ENCODE measurements at regions of chr2 and their contacts with region 1.

Region 1: GRCh38 chr2:86079981-86080911 is 25.4 kb downstream of the POLR1A start:
- DNase-seq: peak; percentile 91
- H3K4me3 Mint-ChIP-seq: no peak overlapping the region
- H3K27ac Mint-ChIP-seq: peak overlapping the region; percentile 81
- H3K4me1 Mint-ChIP-seq: peaks cover 40% of the 10 kb centered on the region
- H3K27me3 Mint-ChIP-seq: no peaks in the 10 kb centered on the region

Region 2: DNA sequence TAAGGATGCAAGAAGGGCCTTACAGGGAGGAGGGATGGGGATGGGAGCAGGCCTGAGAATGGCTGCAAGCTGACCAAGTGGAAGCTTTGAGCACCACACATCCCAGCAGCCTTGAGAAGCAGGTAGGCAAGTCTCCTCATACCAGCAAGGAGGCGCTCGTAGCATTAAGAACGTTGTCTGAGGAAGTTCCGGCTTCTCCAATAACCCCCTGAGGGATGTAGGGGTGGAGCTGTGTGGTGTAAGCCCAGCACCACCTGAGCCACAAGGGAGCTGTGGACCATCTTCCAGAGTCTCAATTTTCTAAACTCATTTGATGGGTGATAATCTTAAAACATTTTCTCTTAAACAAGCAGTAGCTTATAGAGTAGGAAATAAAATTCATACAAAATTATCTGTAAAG is 242.1 kb before region 1 on chr2:
- CTCF ChIA-PET with region 1: interaction called, 11 read pairs
- POLR2A ChIA-PET with region 1: no interaction called
- DNase-seq: no peak
- H3K4me3 Mint-ChIP-seq: no peak overlapping the region
- H3K27ac Mint-ChIP-seq: no peak overlapping the region
- H3K4me1 Mint-ChIP-seq: peaks cover 12% of the 10 kb centered on the region
- H3K27me3 Mint-ChIP-seq: peaks cover 10% of the 10 kb centered on the region

Region 3: DNA sequence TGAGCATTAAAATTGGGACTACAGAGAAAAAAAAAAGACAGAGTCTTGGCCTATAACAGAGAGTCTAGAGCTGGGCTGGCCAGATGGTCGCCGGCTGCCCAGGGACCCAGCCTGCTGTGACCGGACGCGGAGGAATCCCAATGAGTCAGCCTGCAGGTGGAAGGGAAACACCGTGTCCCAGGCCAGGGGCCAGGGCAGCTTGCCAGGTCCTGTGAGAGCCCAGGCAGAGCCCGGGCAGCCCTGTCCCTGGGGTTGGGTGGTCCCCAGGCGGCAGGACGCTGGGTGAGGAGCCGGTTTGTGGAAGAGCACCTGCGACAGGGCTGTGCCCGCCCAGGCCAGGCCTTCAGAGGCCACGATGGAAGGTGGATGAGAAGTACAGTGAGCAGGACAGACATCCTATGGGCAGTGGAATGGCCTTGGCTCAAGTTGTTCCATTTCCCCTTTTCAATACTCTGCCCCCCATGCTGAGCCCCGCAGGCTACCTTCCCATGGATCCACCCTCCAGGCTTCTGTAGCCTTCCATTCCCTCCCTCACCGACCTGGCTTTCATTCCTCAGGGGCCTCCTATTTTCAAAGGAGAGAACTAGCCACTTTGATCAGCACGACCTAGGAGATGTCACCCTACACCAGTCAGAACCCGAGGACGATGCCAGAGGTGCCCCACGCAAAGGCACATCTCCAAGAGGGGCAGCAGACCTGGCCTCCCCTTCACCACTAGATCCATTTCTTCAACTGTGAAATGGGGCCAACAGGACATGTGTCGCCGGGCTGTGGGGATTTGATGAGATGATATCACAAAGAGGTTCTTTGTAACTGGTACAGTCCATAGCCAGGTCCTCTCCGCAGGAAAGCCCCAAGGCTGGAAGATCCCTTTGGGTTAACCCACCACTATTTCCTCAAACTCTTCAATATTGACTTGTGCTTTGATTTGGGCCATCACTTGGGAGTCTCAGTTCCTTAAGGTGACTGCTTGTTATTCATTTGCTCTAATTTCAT is 62.0 kb before region 1 on chr2:
- CTCF ChIA-PET with region 1: no interaction called
- POLR2A ChIA-PET with region 1: no interaction called
- DNase-seq: no peak
- H3K4me3 Mint-ChIP-seq: no peak overlapping the region
- H3K27ac Mint-ChIP-seq: peak overlapping the region; percentile 26
- H3K4me1 Mint-ChIP-seq: peaks cover 20% of the 10 kb centered on the region
- H3K27me3 Mint-ChIP-seq: no peaks in the 10 kb centered on the region

Measured in activated CD4-positive, alpha-beta T cell treated with anti-CD3 and anti-CD28 coated beads, Interleukin-2, amount 10 ng/mL, durations not matched to agents 7 days and 5 days (primary cell).